K562 (cell line): ENCODE measurements at regions of chr2 and their contacts with region 1.

Region 1: DNA sequence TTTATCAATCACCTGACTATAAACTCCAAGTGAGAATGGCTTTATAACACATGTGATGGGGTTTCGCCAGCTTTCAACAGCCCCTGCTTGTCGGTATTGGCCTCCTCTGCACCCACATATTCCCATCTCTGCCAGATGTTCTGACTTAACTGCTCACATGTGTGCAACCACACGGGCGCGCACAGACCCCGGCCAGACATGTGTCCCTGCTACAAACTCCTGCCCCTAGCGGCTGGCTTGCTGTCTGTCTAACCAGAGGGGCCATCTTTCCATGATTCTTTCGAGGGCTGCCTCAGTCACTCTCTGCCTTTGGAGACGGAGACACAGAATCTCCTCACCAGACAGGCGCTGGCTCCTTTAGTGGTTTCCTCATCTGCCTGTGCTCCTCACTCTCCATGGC is 15.3 kb downstream of the STON1 start:
- DNase-seq: peak; percentile 68 to 86 (median 72)
- ATAC-seq: peak; percentile 99
- H3K4me3 ChIP-seq: no peak overlapping the region
- H3K27ac ChIP-seq: no peak overlapping the region
- H3K4me1 ChIP-seq: 0 out of 5 replicates have a peak, but pooled peaks cover 0 to 4% of the 10 kb centered on the region in 2 experiments
- H3K27me3 ChIP-seq: no peaks in the 10 kb centered on the region
- CTCF ChIP-seq: peak; percentile 95 to 100 (median 99)
- EP300 ChIP-seq: no peak
- POLR2A ChIP-seq: no peak
- RAD21 ChIP-seq: peak; percentile 38 to 81

Region 2: DNA sequence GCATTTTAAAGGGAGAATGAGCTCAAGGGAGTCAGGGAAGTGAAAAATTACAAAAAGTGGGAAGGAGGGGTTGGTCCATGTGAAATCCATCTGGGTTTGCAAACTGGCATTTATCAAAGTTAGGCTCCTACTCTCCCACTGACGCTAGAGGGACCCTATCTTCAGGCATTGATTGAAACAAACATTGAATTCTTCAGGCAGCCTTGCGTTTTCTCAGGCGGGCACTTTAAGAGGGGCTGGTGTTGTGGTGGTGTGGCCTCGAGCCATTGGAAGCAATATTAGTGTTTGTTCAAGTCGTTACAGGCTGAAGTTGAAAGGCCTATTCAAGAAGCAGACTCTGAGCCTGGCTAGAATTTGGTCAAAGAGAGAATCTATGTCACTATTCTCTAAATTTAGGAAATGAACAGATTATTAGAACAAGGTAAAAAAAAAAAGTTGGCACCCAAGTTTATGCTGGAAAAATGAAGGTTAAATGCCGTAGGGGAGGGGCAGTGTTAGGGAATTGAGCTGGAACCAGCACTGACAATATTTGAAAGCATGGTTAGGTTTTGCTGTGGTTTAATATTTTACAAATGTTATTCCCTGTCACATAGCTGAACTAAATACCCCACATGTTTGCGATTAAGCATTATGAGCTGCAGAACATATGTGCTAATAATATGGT is 21.5 kb after region 1 on chr2:
- CTCF ChIA-PET with region 1: no interaction called
- POLR2A ChIA-PET with region 1: no interaction called
- in situ Hi-C with region 1: no loop called
- intact Hi-C with region 1: loop called (anchors 2 kb)
- DNase-seq: peak in 1 of 4 experiments; percentile 16
- ATAC-seq: peak; percentile 66
- H3K4me3 ChIP-seq: no peak overlapping the region
- H3K27ac ChIP-seq: no peak overlapping the region
- H3K4me1 ChIP-seq: peaks cover 0 to 4% of the 10 kb centered on the region in 2 experiments; a peak in 2 of 5 replicates
- H3K27me3 ChIP-seq: peaks cover 19 to 21% of the 10 kb centered on the region in 2 experiments
- CTCF ChIP-seq: peak; percentile 32 to 55 (median 37); a peak in 2 of 6 replicates
- EP300 ChIP-seq: no peak
- POLR2A ChIP-seq: no peak
- RAD21 ChIP-seq: no peak; a peak in 1 of 4 replicates